PC-3 (cell line): ENCODE measurements at regions of chr4 and their contacts with region 1.

Region 1: DNA sequence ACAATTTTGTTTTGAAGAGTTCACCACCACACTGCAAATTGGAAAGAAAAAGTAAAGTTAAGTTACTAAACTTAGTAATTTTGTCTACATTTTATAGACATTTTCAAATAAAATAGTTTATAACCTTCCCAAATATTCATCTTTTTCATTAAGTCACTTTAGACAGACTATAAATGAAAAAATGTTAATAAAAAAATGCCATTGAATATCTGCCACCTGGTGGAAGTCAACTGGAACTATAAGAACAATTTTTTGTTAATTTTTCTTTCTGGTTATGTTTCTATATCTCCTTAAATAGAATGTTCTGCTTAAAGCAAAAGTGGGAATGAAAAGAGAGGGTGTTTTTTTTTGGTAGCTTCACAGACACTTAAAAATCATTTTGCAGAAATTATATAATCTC is 534.4 kb upstream of the PCDH10 start:
- DNase-seq: no peak
- ATAC-seq: no peak
- H3K4me3 ChIP-seq: no peak overlapping the region
- H3K27ac ChIP-seq: no peak overlapping the region
- H3K4me1 ChIP-seq: no peaks in the 10 kb centered on the region
- H3K27me3 ChIP-seq: no peaks in the 10 kb centered on the region
- CTCF ChIP-seq: peak; percentile 50

Region 2: DNA sequence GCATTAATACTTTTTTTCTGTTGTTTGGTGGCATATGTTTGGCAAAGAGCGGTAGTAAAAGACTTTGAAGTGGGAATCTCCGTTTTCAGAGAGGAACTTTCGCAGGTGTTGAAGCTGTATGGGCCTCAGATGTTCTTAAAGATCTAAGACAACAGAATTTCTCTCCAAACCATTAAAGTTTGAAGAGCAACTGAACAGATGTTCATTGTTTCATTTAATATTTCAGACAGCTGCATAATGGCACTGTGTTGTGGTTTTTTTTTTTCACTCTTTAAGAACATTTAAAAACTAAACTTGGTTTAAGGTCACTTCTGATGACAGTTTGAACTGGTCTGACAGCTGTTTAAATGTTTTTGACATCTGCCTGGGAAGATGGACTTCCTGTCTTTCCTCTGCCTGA is 348.3 kb before region 1 on chr4:
- CTCF ChIA-PET with region 1: no interaction called
- POLR2A ChIA-PET with region 1: no interaction called
- intact Hi-C with region 1: loop called (anchors 5 kb)
- DNase-seq: no peak
- ATAC-seq: no peak
- H3K4me3 ChIP-seq: no peak overlapping the region
- H3K27ac ChIP-seq: no peak overlapping the region
- H3K4me1 ChIP-seq: no peaks in the 10 kb centered on the region
- H3K27me3 ChIP-seq: no peaks in the 10 kb centered on the region
- CTCF ChIP-seq: no peak

Region 3: DNA sequence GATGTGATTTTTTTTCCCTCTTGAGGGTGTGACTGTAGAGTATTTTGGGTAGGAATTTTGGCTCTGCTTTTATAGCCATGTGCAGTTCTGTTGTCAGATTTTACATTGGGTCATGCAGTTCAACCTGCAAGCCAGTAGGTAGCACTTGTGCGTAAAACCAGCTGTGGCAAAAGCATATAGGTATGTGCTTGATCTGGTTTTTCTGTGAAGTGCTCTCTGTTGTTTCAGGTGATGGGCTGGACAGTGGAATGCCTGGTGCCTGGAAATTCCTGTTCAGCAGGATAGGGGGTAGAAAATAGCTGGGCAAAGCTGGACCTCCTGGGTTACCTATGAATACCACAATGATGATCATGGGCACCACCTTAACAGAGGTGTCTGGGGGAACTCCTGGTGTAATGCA is 49.8 kb before region 1 on chr4:
- CTCF ChIA-PET with region 1: no interaction called
- POLR2A ChIA-PET with region 1: no interaction called
- intact Hi-C with region 1: loop called (anchors 2 kb)
- DNase-seq: peak; percentile 24
- ATAC-seq: peak; percentile 51
- H3K4me3 ChIP-seq: no peak overlapping the region
- H3K27ac ChIP-seq: no peak overlapping the region
- H3K4me1 ChIP-seq: no peaks in the 10 kb centered on the region
- H3K27me3 ChIP-seq: no peaks in the 10 kb centered on the region
- CTCF ChIP-seq: peak; percentile 36